ENCODE measurements at regions of chr16 and their contacts with region 1.

Region 1: DNA sequence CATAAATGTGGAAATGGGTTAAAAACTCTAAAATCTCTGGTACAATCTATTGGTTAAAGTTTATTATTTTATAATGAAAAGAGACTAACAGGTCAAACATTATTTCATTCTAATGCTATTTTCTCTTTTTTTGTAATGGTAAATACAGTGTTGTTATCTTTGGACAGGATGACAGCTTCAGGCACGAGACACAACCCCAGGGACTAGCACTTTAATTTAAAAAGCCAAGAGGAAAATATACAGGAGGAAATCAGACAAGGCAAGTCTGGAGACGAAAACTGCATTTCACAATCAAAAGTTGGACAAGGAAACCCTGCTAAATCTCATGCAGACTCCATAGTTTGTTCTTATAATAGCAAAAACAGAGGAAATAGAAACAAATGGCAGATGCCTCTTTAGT is 589.1 kb upstream of the CDH8 start:
- DNase-seq: no peak
- ATAC-seq: no peak
- H3K4me3 ChIP-seq: no peak overlapping the region
- H3K4me3 Mint-ChIP-seq: no peak overlapping the region
- H3K27ac ChIP-seq: no peak overlapping the region
- H3K27ac Mint-ChIP-seq: no peak overlapping the region
- H3K4me1 ChIP-seq: no peaks in the 10 kb centered on the region
- H3K4me1 Mint-ChIP-seq: no peaks in the 10 kb centered on the region
- H3K27me3 ChIP-seq: no peaks in the 10 kb centered on the region
- H3K27me3 Mint-ChIP-seq: no peaks in the 10 kb centered on the region

Region 2: DNA sequence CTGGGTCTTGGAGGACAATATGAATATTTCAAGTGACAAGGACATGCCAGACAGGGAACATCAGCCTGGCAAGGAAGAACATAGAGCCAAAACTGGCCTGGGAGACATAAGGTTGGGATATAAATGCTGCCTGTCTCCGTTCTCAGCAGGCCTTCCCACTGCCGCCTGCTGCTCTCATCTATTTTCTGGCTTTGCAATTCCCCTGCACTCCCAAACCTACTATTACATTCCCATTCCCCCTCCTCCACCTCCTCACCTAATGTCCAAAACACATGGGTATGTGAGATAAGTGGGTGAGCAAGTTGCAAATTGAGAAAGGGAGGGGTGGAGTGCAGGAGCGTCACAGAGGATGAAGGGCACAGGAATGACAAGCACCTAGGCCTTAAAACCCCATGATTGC is 344.8 kb before region 1 on chr16:
- CTCF ChIA-PET with region 1: no interaction called
- POLR2A ChIA-PET with region 1: no interaction called
- intact Hi-C with region 1: no loop called
- DNase-seq: no peak
- ATAC-seq: no peak
- H3K4me3 ChIP-seq: no peak overlapping the region
- H3K4me3 Mint-ChIP-seq: no peak overlapping the region
- H3K27ac ChIP-seq: no peak overlapping the region
- H3K27ac Mint-ChIP-seq: no peak overlapping the region
- H3K4me1 ChIP-seq: no peaks in the 10 kb centered on the region
- H3K4me1 Mint-ChIP-seq: no peaks in the 10 kb centered on the region
- H3K27me3 ChIP-seq: no peaks in the 10 kb centered on the region
- H3K27me3 Mint-ChIP-seq: no peaks in the 10 kb centered on the region

Region 3: GRCh38 chr16:62596125-62596524 is 29.2 kb before region 1 on chr16:
- CTCF ChIA-PET with region 1: no interaction called
- POLR2A ChIA-PET with region 1: no interaction called
- intact Hi-C with region 1: loop called in 1 of 2 experiments (anchors 1 kb)
- DNase-seq: no peak
- ATAC-seq: no peak
- H3K4me3 ChIP-seq: no peak overlapping the region
- H3K4me3 Mint-ChIP-seq: no peak overlapping the region
- H3K27ac ChIP-seq: no peak overlapping the region
- H3K27ac Mint-ChIP-seq: no peak overlapping the region
- H3K4me1 ChIP-seq: no peaks in the 10 kb centered on the region
- H3K4me1 Mint-ChIP-seq: no peaks in the 10 kb centered on the region
- H3K27me3 ChIP-seq: no peaks in the 10 kb centered on the region
- H3K27me3 Mint-ChIP-seq: no peaks in the 10 kb centered on the region